Activated B cell treated with CpG ODN at 0.5 μM for 24 hours (primary cell): ENCODE measurements at regions of chr15 and their contacts with region 1.

Region 1: GRCh38 chr15:77496710-77497103 is 76.0 kb downstream of the HMG20A start:
- DNase-seq: peak; percentile 67
- ATAC-seq: peak; percentile 75
- H3K4me3 Mint-ChIP-seq: no peak overlapping the region
- H3K27ac Mint-ChIP-seq: no peak overlapping the region
- H3K4me1 Mint-ChIP-seq: peaks cover 17% of the 10 kb centered on the region
- H3K27me3 Mint-ChIP-seq: no peaks in the 10 kb centered on the region
- CTCF ChIP-seq: peak; percentile 66

Region 2: GRCh38 chr15:76905013-76905839 is 591.5 kb before region 1 on chr15 and contains the start of gene SCAPER:
- CTCF ChIA-PET with region 1: no interaction called
- POLR2A ChIA-PET with region 1: no interaction called
- intact Hi-C with region 1: loop called (anchors 5 kb)
- DNase-seq: peak; percentile 92
- ATAC-seq: peak; percentile 86
- H3K4me3 Mint-ChIP-seq: peak within 1 kb of the TSS; percentile 94
- H3K27ac Mint-ChIP-seq: peak within 1 kb of the TSS; percentile 87
- H3K4me1 Mint-ChIP-seq: peaks cover 48% of the 10 kb centered on the region
- H3K27me3 Mint-ChIP-seq: no peaks in the 10 kb centered on the region
- CTCF ChIP-seq: no peak
- total RNA-seq, gene SCAPER: 28.9 and 38.8 TPM in 2 replicates

Region 3: DNA sequence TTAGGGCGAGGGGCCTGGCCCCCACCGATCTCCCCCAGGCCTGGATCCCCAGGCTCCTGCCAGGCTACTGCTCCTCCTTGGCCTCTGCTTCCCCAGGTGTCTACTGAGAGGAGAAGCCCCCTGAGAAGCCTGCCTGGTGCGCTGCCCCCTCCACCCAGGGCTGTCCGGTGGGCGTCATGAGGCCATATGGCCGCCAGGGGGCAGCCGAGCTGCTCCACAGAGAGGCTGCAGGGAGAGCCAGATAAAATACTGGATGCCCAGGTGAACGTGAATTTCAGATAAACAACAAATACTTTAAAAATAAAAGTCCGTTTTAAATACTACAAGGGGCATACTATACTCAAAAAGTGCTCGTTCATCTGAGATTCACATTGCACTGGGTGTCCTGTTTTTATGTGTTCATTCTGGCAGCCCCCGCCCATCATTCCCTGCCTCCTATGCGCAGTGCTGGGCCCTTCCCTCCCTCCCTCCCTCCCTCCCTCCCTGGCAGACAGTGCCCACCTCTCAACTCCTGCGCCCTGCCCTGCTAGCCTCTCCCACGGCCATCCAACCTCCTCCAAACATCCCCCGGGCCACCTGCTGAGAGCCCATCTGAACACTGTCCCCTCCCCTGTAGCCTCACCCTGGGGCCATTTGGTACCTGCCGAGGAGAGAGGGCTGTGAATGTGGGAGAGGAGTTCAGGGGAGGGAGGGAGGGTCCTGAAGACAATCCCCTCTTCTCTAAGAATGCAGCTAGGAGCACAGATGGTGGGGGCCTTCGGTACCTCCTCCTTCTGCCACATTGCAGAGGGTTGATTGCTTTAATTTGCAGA is 472.2 kb before region 1 on chr15:
- CTCF ChIA-PET with region 1: no interaction called
- POLR2A ChIA-PET with region 1: no interaction called
- intact Hi-C with region 1: loop called (anchors 1 kb)
- DNase-seq: peak; percentile 69
- ATAC-seq: peak; percentile 78
- H3K4me3 Mint-ChIP-seq: no peak overlapping the region
- H3K27ac Mint-ChIP-seq: no peak overlapping the region
- H3K4me1 Mint-ChIP-seq: peaks cover 25% of the 10 kb centered on the region
- H3K27me3 Mint-ChIP-seq: no peaks in the 10 kb centered on the region
- CTCF ChIP-seq: peak; percentile 97

Region 4: GRCh38 chr15:77034695-77035489 is 461.8 kb before region 1 on chr15:
- CTCF ChIA-PET with region 1: no interaction called
- POLR2A ChIA-PET with region 1: no interaction called
- intact Hi-C with region 1: loop called (anchors 2 kb)
- DNase-seq: peak; percentile 42
- ATAC-seq: peak; percentile 30
- H3K4me3 Mint-ChIP-seq: no peak overlapping the region
- H3K27ac Mint-ChIP-seq: peak overlapping the region; percentile 18
- H3K4me1 Mint-ChIP-seq: peaks cover 17% of the 10 kb centered on the region
- H3K27me3 Mint-ChIP-seq: no peaks in the 10 kb centered on the region
- CTCF ChIP-seq: no peak

Region 5: DNA sequence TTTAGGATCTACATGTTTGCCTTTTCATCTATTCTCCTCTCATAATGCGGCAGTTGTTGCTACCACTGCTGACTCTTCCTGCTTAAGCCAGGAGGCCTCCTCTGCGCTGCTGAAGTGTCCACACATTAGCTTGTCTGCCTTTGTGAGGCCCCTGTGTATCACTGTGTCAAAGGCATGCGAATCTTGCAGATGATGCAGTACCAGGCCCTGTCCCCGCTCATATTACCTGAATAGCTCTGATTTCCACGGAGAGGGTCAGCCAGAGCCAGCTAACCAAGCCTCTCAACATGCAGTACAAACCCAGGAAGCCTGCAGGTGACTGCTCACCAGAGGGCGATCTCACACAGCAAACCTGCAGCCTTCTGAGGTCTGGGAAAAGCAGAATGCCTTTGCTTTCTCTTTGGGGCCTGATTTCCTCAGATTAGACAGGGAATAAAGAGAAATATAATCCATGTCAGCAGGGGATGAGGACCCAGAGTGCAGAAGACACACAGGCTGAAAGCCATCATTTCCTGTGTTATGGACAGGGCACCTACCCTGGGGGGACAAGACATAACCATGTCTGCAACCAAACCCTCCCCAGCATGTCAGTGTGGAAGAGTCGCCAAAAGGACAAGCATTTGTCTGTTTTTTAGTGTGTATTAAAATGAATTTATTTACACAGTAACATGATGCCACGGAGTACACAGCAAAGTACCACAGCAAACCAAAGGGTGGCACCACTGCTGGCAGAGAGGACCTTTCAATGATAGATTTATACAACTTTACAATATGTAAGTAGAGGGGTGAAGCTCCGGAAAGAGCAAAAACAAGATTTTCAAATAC is 389.0 kb before region 1 on chr15:
- CTCF ChIA-PET with region 1: interaction called, 7 read pairs
- POLR2A ChIA-PET with region 1: interaction called, 3 read pairs
- intact Hi-C with region 1: loop called (anchors 1 kb)
- DNase-seq: no peak
- ATAC-seq: peak; percentile 60
- H3K4me3 Mint-ChIP-seq: no peak overlapping the region
- H3K27ac Mint-ChIP-seq: no peak overlapping the region
- H3K4me1 Mint-ChIP-seq: peaks cover 9% of the 10 kb centered on the region
- H3K27me3 Mint-ChIP-seq: no peaks in the 10 kb centered on the region
- CTCF ChIP-seq: no peak

Region 6: DNA sequence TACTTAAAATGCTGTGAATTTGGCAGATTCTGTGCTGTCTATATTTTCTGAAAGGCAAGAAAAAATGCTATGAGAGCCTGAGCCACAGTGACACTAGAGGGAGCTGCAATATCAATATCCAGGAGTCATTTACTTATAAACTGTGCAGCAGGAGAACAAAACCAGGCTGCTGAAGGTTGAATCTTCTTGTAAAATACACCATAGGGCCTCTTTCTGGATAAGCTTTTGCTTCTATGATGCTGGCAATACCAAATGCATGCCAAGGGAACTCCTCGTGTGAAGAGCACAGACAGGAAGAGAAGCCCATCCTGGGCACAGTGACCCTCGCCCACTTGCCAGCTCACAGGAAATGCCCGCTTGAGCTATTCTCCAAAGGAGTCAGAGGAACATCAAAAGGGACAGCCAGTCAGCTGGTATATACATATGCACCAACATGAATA is 377.8 kb before region 1 on chr15:
- CTCF ChIA-PET with region 1: interaction called, 76 read pairs
- POLR2A ChIA-PET with region 1: no interaction called
- intact Hi-C with region 1: loop called (anchors 1 kb)
- DNase-seq: no peak
- ATAC-seq: peak; percentile 62
- H3K4me3 Mint-ChIP-seq: no peak overlapping the region
- H3K27ac Mint-ChIP-seq: no peak overlapping the region
- H3K4me1 Mint-ChIP-seq: peaks cover 40% of the 10 kb centered on the region
- H3K27me3 Mint-ChIP-seq: no peaks in the 10 kb centered on the region
- CTCF ChIP-seq: no peak

Region 7: DNA sequence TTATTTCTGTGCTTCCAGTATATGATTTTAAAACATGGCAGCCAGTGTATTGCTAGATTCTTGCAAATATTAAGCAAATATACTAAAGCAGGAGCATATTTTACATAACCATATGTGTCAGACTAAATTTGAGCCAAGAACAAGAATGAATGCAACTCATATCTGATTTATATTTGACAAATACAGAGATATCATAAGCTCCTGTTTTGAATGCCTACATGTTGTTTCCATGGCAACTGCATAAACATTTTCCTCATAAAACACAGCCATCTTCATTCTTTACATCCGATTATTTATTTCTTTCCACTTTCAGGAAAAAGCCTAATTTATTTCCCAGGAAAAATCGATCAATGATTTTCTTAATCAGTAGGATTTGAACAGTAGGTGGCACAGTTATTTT is 253.6 kb before region 1 on chr15:
- CTCF ChIA-PET with region 1: no interaction called
- POLR2A ChIA-PET with region 1: no interaction called
- intact Hi-C with region 1: no loop called
- DNase-seq: no peak
- ATAC-seq: no peak
- H3K4me3 Mint-ChIP-seq: no peak overlapping the region
- H3K27ac Mint-ChIP-seq: no peak overlapping the region
- H3K4me1 Mint-ChIP-seq: peaks cover 6% of the 10 kb centered on the region
- H3K27me3 Mint-ChIP-seq: no peaks in the 10 kb centered on the region
- CTCF ChIP-seq: no peak

Region 8: DNA sequence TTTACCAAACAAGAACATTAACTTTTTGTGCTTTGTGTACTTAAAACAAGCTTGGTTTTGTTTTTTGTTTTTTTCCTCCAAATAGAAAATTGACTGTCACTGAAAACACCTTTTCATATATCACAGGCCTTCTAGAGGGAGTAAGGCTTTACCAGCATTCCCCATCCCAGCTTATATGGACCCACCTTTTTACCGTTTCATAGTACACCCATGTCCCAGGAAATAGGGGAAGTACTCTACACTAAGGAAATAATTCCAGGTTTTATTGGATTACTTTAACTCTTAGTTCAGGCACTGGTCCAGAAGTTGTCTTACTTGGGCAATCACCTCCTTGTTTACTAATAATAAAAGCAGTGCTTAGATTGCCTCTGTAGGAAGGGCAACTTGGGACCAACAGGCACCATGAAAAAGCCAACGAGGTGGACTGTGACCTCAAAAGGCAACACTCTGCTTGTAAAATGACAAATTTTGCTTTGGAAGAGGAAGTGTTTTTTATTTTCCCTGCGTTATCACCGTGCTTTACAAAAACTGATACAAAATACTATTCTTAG is 49.8 kb before region 1 on chr15:
- CTCF ChIA-PET with region 1: no interaction called
- POLR2A ChIA-PET with region 1: no interaction called
- intact Hi-C with region 1: no loop called
- DNase-seq: no peak
- ATAC-seq: no peak
- H3K4me3 Mint-ChIP-seq: no peak overlapping the region
- H3K27ac Mint-ChIP-seq: no peak overlapping the region
- H3K4me1 Mint-ChIP-seq: peaks cover 34% of the 10 kb centered on the region
- H3K27me3 Mint-ChIP-seq: no peaks in the 10 kb centered on the region
- CTCF ChIP-seq: no peak

Region 9: GRCh38 chr15:77507911-77508310 is 11.2 kb after region 1 on chr15:
- CTCF ChIA-PET with region 1: interaction called, 14 read pairs
- POLR2A ChIA-PET with region 1: no interaction called
- intact Hi-C with region 1: no loop called
- DNase-seq: no peak
- ATAC-seq: no peak
- H3K4me3 Mint-ChIP-seq: no peak overlapping the region
- H3K27ac Mint-ChIP-seq: no peak overlapping the region
- H3K4me1 Mint-ChIP-seq: peaks cover 28% of the 10 kb centered on the region
- H3K27me3 Mint-ChIP-seq: no peaks in the 10 kb centered on the region
- CTCF ChIP-seq: no peak